Naive thymus-derived CD4-positive, alpha-beta T cell (primary cell): ENCODE measurements at regions of chr3 and their contacts with region 1.

Region 1: GRCh38 chr3:168121184-168122017 is 25.7 kb upstream of the GOLIM4 start:
- DNase-seq: no peak
- ATAC-seq: no peak
- H3K4me3 ChIP-seq: no peak overlapping the region
- H3K4me3 Mint-ChIP-seq: no peak overlapping the region
- H3K27ac ChIP-seq: no peak overlapping the region
- H3K27ac Mint-ChIP-seq: no peak overlapping the region
- H3K4me1 ChIP-seq: no peaks in the 10 kb centered on the region
- H3K4me1 Mint-ChIP-seq: no peaks in the 10 kb centered on the region
- H3K27me3 ChIP-seq: no peaks in the 10 kb centered on the region
- H3K27me3 Mint-ChIP-seq: peaks cover 0 to 11% (median 0%) of the 10 kb centered on the region in 5 donors

Region 2: DNA sequence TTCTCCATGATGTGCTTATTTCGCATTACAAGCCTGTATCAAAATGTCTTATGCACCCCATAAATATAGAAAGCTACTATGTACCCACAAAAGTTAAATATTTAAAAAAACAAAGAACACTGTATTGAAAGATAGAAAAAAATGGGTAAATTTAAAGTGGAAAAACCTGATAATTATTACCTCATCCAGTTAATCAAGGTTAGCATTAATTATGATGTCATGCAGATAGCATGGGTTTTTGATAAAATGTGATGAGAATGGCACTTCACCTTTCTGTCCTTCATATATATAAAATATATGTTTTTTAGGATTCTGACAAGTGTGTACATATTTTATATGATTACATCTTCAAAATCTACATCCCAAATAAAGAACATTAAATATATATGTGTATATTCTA is 1141.3 kb before region 1 on chr3:
- CTCF ChIA-PET with region 1: no interaction called
- POLR2A ChIA-PET with region 1: no interaction called
- intact Hi-C with region 1: no loop called
- DNase-seq: no peak
- ATAC-seq: no peak
- H3K4me3 ChIP-seq: no peak overlapping the region
- H3K4me3 Mint-ChIP-seq: no peak overlapping the region
- H3K27ac ChIP-seq: no peak overlapping the region
- H3K27ac Mint-ChIP-seq: no peak overlapping the region
- H3K4me1 ChIP-seq: no peaks in the 10 kb centered on the region
- H3K4me1 Mint-ChIP-seq: no peaks in the 10 kb centered on the region
- H3K27me3 ChIP-seq: no peaks in the 10 kb centered on the region
- H3K27me3 Mint-ChIP-seq: no peaks in the 10 kb centered on the region

Region 3: GRCh38 chr3:168156479-168156878 is 35.1 kb after region 1 on chr3:
- CTCF ChIA-PET with region 1: no interaction called
- POLR2A ChIA-PET with region 1: no interaction called
- intact Hi-C with region 1: loop called in 1 of 2 experiments (anchors 1 kb)
- DNase-seq: no peak
- ATAC-seq: peak; percentile 37
- H3K4me3 ChIP-seq: no peak overlapping the region
- H3K4me3 Mint-ChIP-seq: no peak overlapping the region
- H3K27ac ChIP-seq: no peak overlapping the region
- H3K27ac Mint-ChIP-seq: no peak overlapping the region
- H3K4me1 ChIP-seq: no peaks in the 10 kb centered on the region
- H3K4me1 Mint-ChIP-seq: no peaks in the 10 kb centered on the region
- H3K27me3 ChIP-seq: no peaks in the 10 kb centered on the region
- H3K27me3 Mint-ChIP-seq: peaks cover 10 to 25% (median 19%) of the 10 kb centered on the region in 5 donors

Region 4: GRCh38 chr3:168939651-168940238 is 818.3 kb after region 1 on chr3:
- CTCF ChIA-PET with region 1: no interaction called
- POLR2A ChIA-PET with region 1: no interaction called
- intact Hi-C with region 1: no loop called
- DNase-seq: no peak
- ATAC-seq: no peak
- H3K4me3 ChIP-seq: no peak overlapping the region
- H3K4me3 Mint-ChIP-seq: no peak overlapping the region
- H3K27ac ChIP-seq: no peak overlapping the region
- H3K27ac Mint-ChIP-seq: no peak overlapping the region
- H3K4me1 ChIP-seq: no peaks in the 10 kb centered on the region
- H3K4me1 Mint-ChIP-seq: no peaks in the 10 kb centered on the region
- H3K27me3 ChIP-seq: no peaks in the 10 kb centered on the region
- H3K27me3 Mint-ChIP-seq: no peaks in the 10 kb centered on the region